HEK293T (cell line): ENCODE measurements at regions of chr3 and their contacts with region 1.

Region 1: DNA sequence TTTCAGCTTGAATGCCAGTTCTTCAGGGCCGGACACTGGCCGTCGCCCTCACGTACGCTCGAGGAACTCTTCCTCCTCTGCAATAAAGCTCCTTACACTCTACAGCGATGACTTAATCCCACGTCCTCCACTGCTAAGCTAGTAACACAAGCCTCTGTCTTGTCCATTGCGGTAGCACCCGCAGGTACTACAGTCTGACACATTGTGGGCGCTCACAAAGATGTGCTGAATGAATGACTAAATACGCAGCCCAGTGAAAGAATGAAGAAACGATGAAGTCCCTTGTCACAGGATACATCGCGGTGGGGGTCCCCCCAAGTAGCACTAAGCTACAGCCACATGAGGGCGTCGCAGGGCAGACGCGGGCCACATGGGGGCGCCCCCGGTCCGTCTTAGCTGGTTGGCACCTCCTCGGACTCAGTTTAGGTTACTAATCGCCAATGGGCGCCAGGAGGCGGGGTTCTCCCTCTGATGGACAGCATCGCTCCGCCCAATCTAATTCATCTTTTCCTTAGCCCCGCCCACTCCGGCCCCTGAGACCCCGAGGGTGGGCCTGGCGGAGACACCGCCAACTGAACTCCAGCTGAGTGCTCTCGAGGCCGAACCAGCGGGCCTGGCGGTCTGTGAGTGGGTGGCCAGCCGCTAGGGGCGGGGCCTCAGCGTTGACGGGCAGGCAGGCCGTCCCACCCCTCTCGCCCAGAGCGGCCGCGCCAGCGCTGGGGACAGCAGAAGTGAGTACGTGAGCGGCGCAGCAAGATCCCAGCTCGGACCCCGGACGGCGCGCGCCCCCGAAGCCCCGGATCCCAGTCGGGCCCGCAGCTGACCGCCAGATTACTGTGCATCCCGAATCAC is at the start of gene EPHB3:
- DNase-seq: peak; percentile 94

Region 2: GRCh38 chr3:184448311-184449160 is 112.8 kb before region 1 on chr3:
- CTCF ChIA-PET with region 1: no interaction called
- POLR2A ChIA-PET with region 1: no interaction called
- DNase-seq: no peak

Region 3: GRCh38 chr3:184549793-184550577 is 11.3 kb before region 1 on chr3:
- CTCF ChIA-PET with region 1: interaction called, 10 read pairs
- POLR2A ChIA-PET with region 1: interaction called, 5 read pairs
- DNase-seq: no peak

Region 4: GRCh38 chr3:184711493-184712247 is 150.4 kb after region 1 on chr3 and contains the start of gene MAGEF1:
- CTCF ChIA-PET with region 1: interaction called, 4 read pairs
- POLR2A ChIA-PET with region 1: interaction called, 13 read pairs
- DNase-seq: peak; percentile 83

Region 5: DNA sequence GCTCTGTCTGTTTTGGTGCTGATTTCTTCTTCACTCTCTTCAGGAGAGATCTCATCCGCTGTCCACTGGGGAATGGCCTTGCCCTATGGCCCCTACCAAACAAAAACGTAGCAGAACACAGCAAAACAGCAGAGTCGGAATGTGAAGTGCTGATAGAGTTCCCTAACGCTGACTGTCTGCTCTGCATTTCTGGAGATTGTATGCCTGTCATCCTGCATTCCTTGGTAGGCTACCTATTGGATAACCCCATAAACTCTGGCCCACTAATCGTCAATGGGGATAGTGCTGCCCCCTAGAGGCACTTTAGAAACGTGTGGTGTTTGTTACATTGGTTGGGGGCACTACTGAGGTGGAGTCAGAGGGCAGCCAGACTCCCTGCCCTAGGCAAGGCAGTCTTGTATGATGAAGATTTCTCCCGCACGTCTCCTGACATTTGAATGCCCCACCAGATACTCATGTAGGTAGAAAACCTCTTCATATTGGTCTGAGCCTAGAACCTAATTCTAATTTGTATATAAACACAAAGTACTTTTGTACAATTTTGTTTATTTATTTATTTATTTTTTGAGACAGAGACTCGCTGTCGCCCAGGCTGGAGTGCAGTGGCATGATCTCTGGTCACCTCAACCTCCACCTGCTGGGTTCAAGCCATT is 166.2 kb after region 1 on chr3:
- CTCF ChIA-PET with region 1: interaction called, 11 read pairs
- POLR2A ChIA-PET with region 1: interaction called, 4 read pairs
- DNase-seq: peak; percentile 69

Region 6: GRCh38 chr3:184777336-184778004 is 216.2 kb after region 1 on chr3:
- CTCF ChIA-PET with region 1: interaction called, 6 read pairs
- POLR2A ChIA-PET with region 1: interaction called, 12 read pairs
- DNase-seq: peak; percentile 71